ENCODE measurements at regions of chr4 and their contacts with region 1.

Region 1: DNA sequence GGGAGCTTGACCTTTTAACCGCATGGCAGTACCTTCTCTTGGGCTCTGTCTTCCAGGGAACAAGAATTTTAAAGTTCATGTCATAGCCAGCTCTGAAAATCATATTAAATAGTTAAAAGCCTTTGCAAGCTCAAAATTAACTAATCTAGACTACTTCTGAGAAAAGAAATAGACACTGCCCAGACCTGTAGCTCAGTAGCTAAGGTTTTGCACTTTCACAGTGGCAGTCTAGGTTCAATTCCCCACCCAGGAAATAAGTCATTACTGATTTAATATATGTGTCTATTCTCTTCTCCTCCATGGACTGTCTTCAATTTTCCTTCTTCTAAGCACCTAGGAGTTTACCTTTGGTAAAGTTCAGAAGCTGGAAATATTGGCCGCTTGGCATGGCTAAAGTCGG is 27.4 kb downstream of the HSD17B11 start:
- DNase-seq: no peak

Region 2: DNA sequence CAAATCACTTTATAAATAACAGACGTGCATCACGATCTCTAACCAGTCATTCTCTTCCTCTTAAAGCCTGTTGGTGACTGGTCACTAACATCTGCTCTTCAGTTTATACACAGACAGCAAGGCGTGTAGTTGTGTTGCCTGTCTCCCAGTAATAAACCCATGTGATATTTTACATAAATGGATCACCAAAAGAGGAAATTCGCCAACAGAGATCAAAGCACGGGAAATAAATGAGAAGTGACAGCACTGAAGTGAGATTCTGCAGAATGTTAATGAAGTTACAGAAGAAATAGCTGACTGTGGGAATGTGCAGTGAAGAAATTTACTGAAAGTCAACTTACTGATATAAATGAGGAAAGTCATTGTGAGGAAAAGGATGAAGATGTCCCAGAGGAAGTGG is 381.8 kb before region 1 on chr4:
- intact Hi-C with region 1: no loop called
- DNase-seq: no peak

Region 3: DNA sequence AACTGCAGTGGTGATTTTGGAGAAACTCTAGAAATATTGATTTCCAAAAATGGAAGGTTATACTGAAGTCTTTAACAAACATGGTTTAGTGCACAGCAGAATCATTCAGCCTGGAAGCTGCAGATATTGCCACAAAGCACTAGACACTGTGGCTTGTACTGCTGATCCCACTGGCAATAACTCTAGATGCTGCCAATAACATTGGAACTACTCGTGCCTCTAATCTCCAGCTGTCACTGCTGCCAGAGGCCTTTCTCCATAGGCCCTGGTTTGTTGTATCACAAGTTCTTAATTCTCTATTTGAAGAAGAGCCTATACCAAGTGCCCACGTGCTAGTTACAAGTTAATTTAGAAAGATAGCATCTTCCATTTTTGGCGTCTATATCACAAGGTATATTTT is 305.8 kb after region 1 on chr4:
- intact Hi-C with region 1: loop called (anchors 10 kb)
- DNase-seq: no peak